ENCODE measurements at regions of chr14 and their contacts with region 1.

Region 1: DNA sequence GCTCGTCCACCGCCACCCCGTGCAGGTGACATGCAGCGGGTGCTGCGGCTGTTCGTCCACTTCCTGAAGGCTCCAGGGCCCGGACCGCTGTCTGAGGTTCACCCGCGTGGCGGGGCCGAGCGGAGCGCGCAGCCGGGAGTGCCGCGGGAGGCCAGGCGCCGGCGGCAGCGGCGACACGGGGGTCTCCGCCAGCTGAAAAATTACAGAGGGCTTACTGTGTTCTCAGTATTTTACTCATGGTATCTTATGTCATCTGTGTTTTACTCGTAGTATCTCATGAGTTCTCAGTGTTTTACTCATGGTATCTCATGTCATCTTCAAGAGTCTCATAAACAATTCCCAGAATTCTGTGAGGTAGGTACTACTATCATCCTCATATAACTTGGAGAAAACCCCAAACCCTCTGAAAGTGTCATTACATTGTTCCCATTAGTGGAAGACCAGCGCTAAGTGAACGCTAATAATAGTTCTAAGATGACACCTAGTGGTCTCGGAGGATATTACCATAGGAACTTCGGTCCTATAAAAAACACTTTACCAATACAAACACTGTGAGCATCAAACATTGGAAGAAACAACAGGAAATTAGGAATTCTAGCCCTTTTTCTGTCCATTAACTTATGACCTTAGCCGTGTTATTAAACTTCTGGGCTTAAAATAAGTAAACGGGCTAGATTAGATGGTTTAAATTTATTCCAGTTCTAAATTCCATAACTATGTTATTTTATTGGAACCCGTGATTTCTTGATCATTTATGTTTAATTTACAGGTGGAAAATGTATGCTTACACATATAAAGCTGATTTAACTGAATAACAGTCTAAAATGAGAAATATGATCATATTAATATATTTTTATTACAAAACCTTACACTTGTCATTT is 32.4 kb downstream of the AK7 start:
- DNase-seq: peak; percentile 53
- ATAC-seq: peak; percentile 77
- H3K4me3 Mint-ChIP-seq: peak overlapping the region; percentile 54
- H3K27ac Mint-ChIP-seq: no peak overlapping the region
- H3K4me1 Mint-ChIP-seq: peaks cover 2% of the 10 kb centered on the region
- H3K27me3 Mint-ChIP-seq: peaks cover 3% of the 10 kb centered on the region

Region 2: GRCh38 chr14:96100161-96101029 is 324.0 kb before region 1 on chr14:
- CTCF ChIA-PET with region 1: interaction called, 4 read pairs
- POLR2A ChIA-PET with region 1: no interaction called
- intact Hi-C with region 1: loop called (anchors 1 kb)
- DNase-seq: peak; percentile 84
- ATAC-seq: peak; percentile 66
- H3K4me3 Mint-ChIP-seq: no peak overlapping the region
- H3K27ac Mint-ChIP-seq: no peak overlapping the region
- H3K4me1 Mint-ChIP-seq: no peaks in the 10 kb centered on the region
- H3K27me3 Mint-ChIP-seq: no peaks in the 10 kb centered on the region

Region 3: GRCh38 chr14:96297000-96297399 is 127.3 kb before region 1 on chr14:
- CTCF ChIA-PET with region 1: interaction called, 9 read pairs
- POLR2A ChIA-PET with region 1: no interaction called
- intact Hi-C with region 1: loop called (anchors 1 kb)
- DNase-seq: no peak
- ATAC-seq: no peak
- H3K4me3 Mint-ChIP-seq: no peak overlapping the region
- H3K27ac Mint-ChIP-seq: no peak overlapping the region
- H3K4me1 Mint-ChIP-seq: no peaks in the 10 kb centered on the region
- H3K27me3 Mint-ChIP-seq: no peaks in the 10 kb centered on the region

Measured in activated CD4-positive, alpha-beta T cell treated with anti-CD3 and anti-CD28 coated beads for 36 hours (primary cell).